PC-3 (cell line): ENCODE measurements at regions of chrX and their contacts with region 1.

Region 1: GRCh38 chrX:109714340-109714958 is 18.6 kb downstream of the ACSL4 start:
- DNase-seq: peak; percentile 84
- ATAC-seq: peak; percentile 95
- H3K4me3 ChIP-seq: peak overlapping the region; percentile 7; the same call in 1 of the 2 replicates
- H3K27ac ChIP-seq: peak overlapping the region; percentile 50
- H3K4me1 ChIP-seq: peaks cover 22% of the 10 kb centered on the region
- H3K27me3 ChIP-seq: no peaks in the 10 kb centered on the region
- CTCF ChIP-seq: no peak

Region 2: GRCh38 chrX:109218761-109219160 is 495.7 kb before region 1 on chrX:
- CTCF ChIA-PET with region 1: no interaction called
- POLR2A ChIA-PET with region 1: no interaction called
- intact Hi-C with region 1: no loop called
- DNase-seq: no peak
- ATAC-seq: no peak
- H3K4me3 ChIP-seq: no peak overlapping the region
- H3K27ac ChIP-seq: no peak overlapping the region
- H3K4me1 ChIP-seq: no peaks in the 10 kb centered on the region
- H3K27me3 ChIP-seq: no peaks in the 10 kb centered on the region
- CTCF ChIP-seq: no peak

Region 3: DNA sequence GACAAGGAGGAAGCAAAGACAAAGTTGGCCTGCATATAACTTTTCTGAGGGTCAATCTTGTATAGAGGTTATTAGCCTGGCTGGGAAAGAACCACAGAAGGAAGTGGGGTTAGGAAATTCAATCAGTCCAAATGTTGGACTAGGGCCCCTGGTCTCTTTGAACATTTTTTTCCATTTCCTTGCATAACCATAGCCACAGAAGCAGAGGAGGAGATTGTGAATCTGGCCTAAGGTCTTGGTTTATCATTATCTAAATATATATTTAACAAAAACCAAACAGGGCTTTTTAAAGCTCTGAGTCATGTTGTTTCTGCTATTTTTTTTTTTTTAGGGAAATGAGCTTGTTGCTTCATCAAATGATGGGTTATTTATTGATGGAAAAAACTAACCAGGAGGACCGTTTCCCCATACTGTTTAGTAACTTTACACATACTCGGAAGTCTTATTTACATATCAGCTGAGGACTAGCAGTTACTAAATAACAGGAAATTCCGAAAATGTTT is 116.3 kb after region 1 on chrX:
- CTCF ChIA-PET with region 1: no interaction called
- POLR2A ChIA-PET with region 1: no interaction called
- intact Hi-C with region 1: no loop called
- DNase-seq: peak; percentile 46
- ATAC-seq: peak; percentile 66
- H3K4me3 ChIP-seq: no peak overlapping the region
- H3K27ac ChIP-seq: 0 out of 2 replicates have a peak overlapping the region, but pooled peaks have one; percentile 9
- H3K4me1 ChIP-seq: peaks cover 18% of the 10 kb centered on the region
- H3K27me3 ChIP-seq: no peaks in the 10 kb centered on the region
- CTCF ChIP-seq: no peak

Region 4: DNA sequence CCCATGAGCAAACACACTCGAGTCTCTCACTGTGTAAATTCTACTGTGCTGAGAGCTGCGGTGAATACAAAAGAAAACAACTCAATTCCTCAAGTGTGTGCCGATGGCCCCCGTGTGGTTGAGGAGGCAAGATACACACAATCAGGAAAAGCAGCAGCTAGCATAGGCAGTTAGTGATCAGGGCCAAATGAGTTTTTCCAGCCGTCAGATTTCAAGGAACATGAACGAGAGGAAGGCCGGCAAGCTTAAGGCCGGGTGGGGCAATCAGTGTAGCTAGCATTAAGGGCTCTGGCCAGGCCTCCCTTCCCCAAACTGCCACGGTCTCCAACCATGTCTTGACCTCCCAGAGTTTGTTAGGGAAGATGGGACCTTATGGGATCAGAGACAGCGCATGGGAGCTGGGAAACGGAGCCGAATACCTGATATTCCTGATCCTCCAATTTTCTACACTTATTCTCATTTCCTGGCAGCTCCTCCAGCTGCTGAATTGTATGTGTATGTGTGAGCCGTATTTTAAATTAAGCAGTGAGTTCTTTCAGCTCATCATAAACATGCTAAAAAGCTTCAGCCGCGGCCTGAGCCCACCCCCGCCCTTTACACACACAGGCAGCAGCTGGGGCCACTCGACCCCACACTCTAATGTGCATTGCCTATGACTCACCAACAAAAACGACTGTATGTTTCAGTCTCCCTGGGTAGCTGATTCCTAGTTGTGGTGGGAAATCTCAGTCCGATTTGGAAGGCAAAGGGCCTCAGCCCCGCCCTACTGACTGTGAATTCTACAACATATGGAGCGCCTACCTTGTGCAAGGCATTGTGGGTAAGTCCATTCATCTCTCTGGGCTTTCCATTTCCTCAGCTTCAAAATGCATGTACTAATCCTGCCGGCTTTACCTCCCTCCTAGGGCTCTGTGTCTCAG is 704.1 kb after region 1 on chrX:
- CTCF ChIA-PET with region 1: no interaction called
- POLR2A ChIA-PET with region 1: no interaction called
- intact Hi-C with region 1: loop called (anchors 5 kb)
- DNase-seq: peak; percentile 67
- ATAC-seq: peak; percentile 66
- H3K4me3 ChIP-seq: 0 out of 2 replicates have a peak overlapping the region, but pooled peaks have one; percentile 11
- H3K27ac ChIP-seq: peak overlapping the region; percentile 59
- H3K4me1 ChIP-seq: peaks cover 52% of the 10 kb centered on the region
- H3K27me3 ChIP-seq: no peaks in the 10 kb centered on the region
- CTCF ChIP-seq: peak; percentile 75